ENCODE measurements at regions of chr6 and their contacts with region 1.

Region 1: DNA sequence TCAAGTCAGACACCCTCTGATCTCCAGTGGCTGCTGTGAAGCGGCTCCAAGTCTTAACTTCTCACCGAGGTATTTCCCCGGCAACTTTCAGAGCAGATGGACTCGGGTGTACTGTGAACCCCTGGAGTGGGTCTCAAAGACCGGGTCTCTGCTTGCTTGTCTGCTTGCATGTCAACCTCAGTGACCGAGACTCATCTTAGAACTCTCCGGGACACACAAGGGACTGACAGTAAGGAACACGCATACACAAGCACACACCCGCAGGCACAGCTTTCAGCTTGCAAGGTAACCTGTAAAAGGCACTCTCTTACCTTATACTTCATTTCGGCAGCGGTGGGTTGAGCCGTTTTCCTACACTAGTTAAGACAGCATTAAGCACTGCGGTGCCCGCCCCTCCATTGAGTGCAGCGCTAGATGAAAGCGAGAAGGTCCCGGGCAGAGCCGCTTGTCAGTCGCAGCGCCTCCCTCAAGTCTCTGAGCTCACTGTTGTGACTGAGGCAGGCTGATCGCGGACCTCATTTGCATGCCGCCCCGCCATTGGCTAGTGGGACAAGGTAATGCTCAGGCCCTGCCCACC is at the start of gene NEDD9:
- DNase-seq: peak; percentile 95
- ATAC-seq: peak; percentile 95
- H3K4me3 Mint-ChIP-seq: peak within 1 kb of the TSS; percentile 79
- H3K27ac Mint-ChIP-seq: peak within 1 kb of the TSS; percentile 98
- H3K4me1 Mint-ChIP-seq: peaks cover 63% of the 10 kb centered on the region
- H3K27me3 Mint-ChIP-seq: no peaks in the 10 kb centered on the region
- CTCF ChIP-seq: no peak
- total RNA-seq, gene NEDD9: 7.0 to 9.8 TPM (median 8.3 TPM) in 3 replicates

Region 2: GRCh38 chr6:11172501-11173332 is 59.6 kb before region 1 on chr6:
- CTCF ChIA-PET with region 1: interaction called, 14 read pairs
- POLR2A ChIA-PET with region 1: no interaction called
- DNase-seq: peak; percentile 84
- ATAC-seq: peak; percentile 85
- H3K4me3 Mint-ChIP-seq: peak overlapping the region; percentile 17; the same call in 1 of the 2 replicates
- H3K27ac Mint-ChIP-seq: no peak overlapping the region
- H3K4me1 Mint-ChIP-seq: peaks cover 17% of the 10 kb centered on the region
- H3K27me3 Mint-ChIP-seq: no peaks in the 10 kb centered on the region; the same call in 1 of the 2 replicates
- CTCF ChIP-seq: peak; percentile 91

Region 3: DNA sequence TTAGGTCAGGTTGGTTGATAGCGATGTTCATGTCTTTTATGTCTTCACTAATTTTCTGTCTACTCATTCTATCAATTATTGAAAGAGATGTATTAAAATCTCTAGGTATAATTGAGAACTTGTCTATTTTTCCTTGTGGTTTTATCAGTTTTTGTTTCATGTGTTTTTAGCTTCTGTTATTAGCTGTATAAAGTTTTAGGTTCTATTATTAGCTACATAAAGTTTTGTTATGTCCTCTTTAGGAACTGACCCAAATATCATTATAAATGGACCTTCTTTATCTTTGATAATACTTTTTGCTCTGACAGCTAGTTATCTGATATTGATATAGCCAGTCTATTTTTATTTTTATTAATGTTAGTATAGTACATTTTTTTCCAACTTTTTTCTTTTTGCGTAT is 212.9 kb after region 1 on chr6:
- CTCF ChIA-PET with region 1: no interaction called
- POLR2A ChIA-PET with region 1: no interaction called
- DNase-seq: no peak
- ATAC-seq: no peak
- H3K4me3 Mint-ChIP-seq: no peak overlapping the region
- H3K27ac Mint-ChIP-seq: no peak overlapping the region
- H3K4me1 Mint-ChIP-seq: peaks cover 17% of the 10 kb centered on the region
- H3K27me3 Mint-ChIP-seq: no peaks in the 10 kb centered on the region
- CTCF ChIP-seq: no peak

Measured in WTC11 (cell line).